Adrenal gland (tissue), 19 donors: ENCODE measurements at regions of chr1 and their contacts with region 1.

Region 1: GRCh38 chr1:167687919-167688519 is 33.8 kb upstream of the MPZL1 start:
- DNase-seq: peak; percentile 60 to 94 (median 84)
- H3K4me3 ChIP-seq: no peak overlapping the region
- H3K27ac ChIP-seq: no peak overlapping the region
- H3K4me1 ChIP-seq: peaks cover 15 to 31% of the 10 kb centered on the region in 2 donors
- H3K27me3 ChIP-seq: no peaks in the 10 kb centered on the region
- CTCF ChIP-seq: peak; percentile 88 to 97 (median 92)
- POLR2A ChIP-seq: no peak

Region 2: DNA sequence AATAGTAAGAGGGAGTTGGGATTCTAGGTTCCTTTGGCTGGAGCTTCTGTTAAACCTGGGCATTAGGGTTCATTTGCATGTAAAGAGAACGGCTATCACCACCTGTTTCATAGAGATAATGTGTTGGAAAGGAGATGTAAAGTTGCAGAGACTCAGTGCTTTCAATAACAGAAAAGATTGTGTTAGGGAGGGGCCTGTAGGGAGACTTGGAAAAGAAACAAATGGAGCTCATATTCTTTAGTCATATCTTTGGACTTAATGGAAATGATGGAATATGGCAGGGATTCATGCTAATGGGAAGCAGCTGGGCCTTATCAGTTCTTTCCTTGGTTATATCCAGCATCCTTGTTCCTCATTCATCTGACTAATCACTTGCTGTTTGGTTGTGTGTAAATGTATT is 314.6 kb before region 1 on chr1:
- intact Hi-C with region 1: no loop called
- DNase-seq: no peak
- H3K4me3 ChIP-seq: no peak overlapping the region
- H3K27ac ChIP-seq: no peak overlapping the region
- H3K4me1 ChIP-seq: peaks cover 0 to 8% of the 10 kb centered on the region in 2 donors
- H3K27me3 ChIP-seq: no peaks in the 10 kb centered on the region
- CTCF ChIP-seq: no peak
- POLR2A ChIP-seq: no peak

Region 3: DNA sequence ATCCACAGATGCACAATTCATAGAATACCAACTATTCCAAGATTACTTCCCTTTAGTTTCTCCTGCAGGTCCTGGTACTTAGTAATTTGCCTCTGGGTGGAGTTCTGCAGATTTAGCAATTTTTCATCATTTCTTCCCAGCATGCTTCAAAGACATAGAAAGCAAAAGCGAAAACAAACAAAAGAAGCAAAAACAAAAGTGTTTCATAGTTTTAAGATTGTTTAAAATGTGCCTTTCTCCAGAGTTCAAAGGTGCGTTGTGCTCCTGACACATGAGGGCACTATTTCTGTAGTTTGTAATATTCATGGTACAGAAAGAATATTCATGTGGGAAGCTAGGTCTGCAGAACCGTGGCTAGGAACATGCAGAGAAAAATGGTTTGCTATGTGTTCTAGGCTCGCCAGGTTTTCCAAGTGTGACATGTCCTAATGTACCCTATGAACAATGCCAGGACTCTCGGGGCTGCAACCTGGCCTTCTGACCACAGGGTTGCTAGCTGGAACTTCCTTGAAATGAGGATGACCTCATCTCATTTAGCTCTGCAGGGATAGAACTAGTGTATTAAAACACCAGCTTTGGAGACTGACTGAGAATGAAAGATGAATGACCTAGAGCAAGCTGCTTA is 88.0 kb before region 1 on chr1:
- intact Hi-C with region 1: loop called (anchors 2 to 5 kb)
- DNase-seq: peak; percentile 46 to 91 (median 79)
- H3K4me3 ChIP-seq: no peak overlapping the region
- H3K27ac ChIP-seq: peak overlapping the region in 3 of 5 donors; percentile 18 to 22 (median 18)
- H3K4me1 ChIP-seq: peaks cover 6 to 26% of the 10 kb centered on the region in 2 donors
- H3K27me3 ChIP-seq: no peaks in the 10 kb centered on the region
- CTCF ChIP-seq: peak; percentile 37 to 77 (median 56)
- POLR2A ChIP-seq: no peak

Region 4: DNA sequence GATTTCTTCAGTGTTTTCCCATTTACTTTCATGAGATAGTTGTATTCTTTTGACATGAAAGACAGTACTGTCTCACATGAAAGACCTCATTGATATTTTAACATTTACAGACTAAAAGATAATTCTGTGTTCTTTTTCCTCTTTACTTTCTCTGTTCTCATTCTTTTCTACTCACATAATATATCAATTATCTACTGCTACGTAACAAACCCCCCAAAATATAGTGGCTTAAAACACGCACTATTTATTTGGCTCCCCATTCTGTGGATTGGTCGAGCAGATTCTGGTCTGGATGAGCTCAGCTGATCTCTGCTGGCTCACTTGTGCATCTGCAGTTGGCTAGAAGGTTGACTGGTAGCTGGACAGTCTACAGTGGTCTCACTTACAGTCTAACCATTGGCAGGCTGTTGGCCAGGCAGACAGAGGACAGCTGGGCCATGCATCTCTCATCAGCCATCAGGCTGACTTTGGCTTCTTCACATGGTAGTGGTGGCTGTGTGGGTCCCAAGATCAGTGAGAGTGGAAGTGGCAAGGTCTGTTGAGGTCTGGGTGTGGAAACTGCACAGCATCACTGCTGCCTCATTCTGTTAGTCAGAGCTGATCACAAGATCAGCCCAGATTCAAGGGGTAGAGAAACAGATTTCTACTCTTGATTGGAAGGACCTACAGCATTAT is 97.0 kb after region 1 on chr1:
- intact Hi-C with region 1: no loop called
- DNase-seq: no peak
- H3K4me3 ChIP-seq: no peak overlapping the region
- H3K27ac ChIP-seq: no peak overlapping the region
- H3K4me1 ChIP-seq: no peaks in the 10 kb centered on the region
- H3K27me3 ChIP-seq: no peaks in the 10 kb centered on the region
- CTCF ChIP-seq: no peak
- POLR2A ChIP-seq: no peak